Kidney (tissue), 22 donors: ENCODE measurements at regions of chr16 and their contacts with region 1.

Region 1: DNA sequence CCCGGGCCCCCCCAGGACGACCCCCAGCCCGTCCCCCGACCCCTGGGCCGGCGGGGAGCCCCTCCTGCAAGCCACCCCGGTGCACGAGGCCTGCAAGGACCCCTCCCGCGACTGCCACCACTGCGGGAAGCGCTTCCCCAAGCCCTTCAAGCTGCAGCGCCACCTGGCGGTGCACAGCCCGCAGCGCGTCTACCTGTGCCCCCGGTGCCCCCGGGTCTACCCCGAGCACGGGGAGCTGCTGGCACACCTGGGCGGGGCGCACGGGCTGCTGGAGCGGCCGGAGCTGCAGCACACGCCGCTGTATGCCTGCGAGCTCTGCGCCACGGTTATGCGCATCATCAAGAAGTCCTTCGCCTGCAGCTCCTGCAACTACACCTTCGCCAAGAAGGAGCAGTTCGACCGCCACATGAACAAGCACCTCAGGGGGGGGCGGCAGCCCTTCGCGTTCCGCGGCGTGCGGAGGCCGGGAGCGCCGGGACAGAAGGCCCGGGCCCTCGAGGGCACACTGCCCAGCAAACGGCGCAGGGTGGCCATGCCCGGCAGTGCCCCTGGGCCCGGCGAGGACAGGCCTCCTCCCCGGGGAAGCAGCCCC is 15.6 kb upstream of the ZFPM1 start:
- DNase-seq: peak in 4 of 5 donors; percentile 48 to 82 (median 70)
- H3K4me3 ChIP-seq: no peak overlapping the region
- H3K27ac ChIP-seq: no peak overlapping the region
- H3K4me1 ChIP-seq: no peaks in the 10 kb centered on the region
- H3K27me3 ChIP-seq: no peaks in the 10 kb centered on the region
- CTCF ChIP-seq: peak; percentile 90

Region 2: GRCh38 chr16:88194397-88195268 is 242.8 kb before region 1 on chr16:
- intact Hi-C with region 1: loop called (anchors 10 kb)
- DNase-seq: peak in 4 of 5 donors; percentile 68 to 80 (median 75)
- H3K4me3 ChIP-seq: no peak overlapping the region
- H3K27ac ChIP-seq: no peak overlapping the region
- H3K4me1 ChIP-seq: peaks cover 0 to 3% (median 2%) of the 10 kb centered on the region in 3 donors
- H3K27me3 ChIP-seq: peaks cover 2% of the 10 kb centered on the region
- CTCF ChIP-seq: no peak